Panc1 (cell line): ENCODE measurements at regions of chr9 and their contacts with region 1.

Region 1: GRCh38 chr9:91775011-91775707 is 174.9 kb downstream of the ROR2 start:
- DNase-seq: no peak
- ATAC-seq: peak; percentile 90
- H3K4me3 ChIP-seq: no peak overlapping the region
- H3K27ac ChIP-seq: no peak overlapping the region
- H3K4me1 ChIP-seq: no peaks in the 10 kb centered on the region
- H3K27me3 ChIP-seq: no peaks in the 10 kb centered on the region
- CTCF ChIP-seq: peak; percentile 84

Region 2: DNA sequence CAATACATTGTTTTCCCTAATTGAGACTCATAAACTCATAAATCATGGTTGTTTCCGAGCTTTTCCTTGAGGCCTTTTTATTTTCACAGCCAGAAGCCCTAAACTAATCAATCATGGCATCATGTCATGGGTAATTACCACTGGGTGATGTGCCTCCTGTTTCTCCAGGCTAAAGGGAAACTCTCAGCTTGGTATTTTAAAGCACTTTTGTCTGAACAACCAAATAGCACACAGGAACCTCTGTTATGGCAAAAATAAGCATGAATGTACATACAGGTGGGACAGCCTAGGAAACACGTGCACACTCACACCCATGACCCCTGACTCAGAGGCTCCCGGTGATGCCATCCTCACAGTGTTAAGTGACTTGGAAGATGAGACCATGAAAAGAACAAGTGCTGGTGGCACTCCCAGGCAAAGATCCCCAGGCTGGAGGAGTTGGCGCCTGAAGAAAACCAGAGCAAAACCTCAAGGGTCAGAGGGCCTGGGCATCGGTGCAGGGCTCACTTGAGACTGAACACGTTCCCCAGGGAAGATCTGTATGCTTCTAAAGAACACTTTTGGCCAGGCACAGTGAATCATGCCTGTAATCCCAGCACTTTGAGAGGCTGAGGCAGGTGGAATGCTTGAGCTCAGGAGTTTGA is 20.6 kb after region 1 on chr9:
- CTCF ChIA-PET with region 1: interaction called, 10 read pairs
- POLR2A ChIA-PET with region 1: no interaction called
- in situ Hi-C with region 1: no loop called
- intact Hi-C with region 1: no loop called
- DNase-seq: no peak
- ATAC-seq: peak; percentile 65
- H3K4me3 ChIP-seq: no peak overlapping the region
- H3K27ac ChIP-seq: no peak overlapping the region
- H3K4me1 ChIP-seq: no peaks in the 10 kb centered on the region
- H3K27me3 ChIP-seq: no peaks in the 10 kb centered on the region
- CTCF ChIP-seq: no peak

Region 3: DNA sequence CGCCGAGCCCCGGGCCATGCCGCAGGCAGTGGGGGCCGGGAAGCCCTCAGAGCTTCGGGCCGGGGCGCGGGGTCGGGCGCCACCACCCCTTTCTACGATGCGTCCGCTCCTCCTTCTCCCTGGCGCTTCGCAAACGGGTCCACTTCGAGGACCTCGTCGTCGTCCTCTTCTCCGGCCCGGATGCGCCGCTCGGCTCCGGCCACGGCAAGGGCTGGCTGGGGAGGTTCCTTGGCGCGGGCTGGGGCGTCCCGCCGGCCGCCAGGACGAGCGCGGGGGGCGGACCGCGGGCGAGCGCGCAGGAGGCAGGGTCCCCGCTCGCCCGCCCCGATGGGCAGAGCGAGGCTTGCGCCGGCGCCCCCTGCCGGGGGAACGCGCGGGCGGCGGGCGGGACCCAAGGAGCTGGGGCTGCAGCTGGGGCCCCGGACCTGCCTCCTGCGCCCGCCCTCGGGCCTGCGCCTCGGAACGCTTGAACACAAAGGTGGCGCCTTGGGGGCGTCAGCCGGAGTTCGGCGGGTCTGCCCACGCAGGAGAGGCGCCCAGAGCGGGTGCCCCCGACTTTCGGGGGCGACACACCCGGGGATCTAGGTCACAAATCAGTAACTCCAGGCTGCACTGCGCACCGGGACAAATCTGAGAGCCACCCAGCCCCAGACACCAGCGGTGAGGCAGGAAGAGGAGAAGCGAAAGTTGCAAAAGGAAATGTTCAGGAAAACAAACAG is 174.9 kb after region 1 on chr9 and contains the start of gene ROR2:
- CTCF ChIA-PET with region 1: no interaction called
- POLR2A ChIA-PET with region 1: no interaction called
- in situ Hi-C with region 1: no loop called
- intact Hi-C with region 1: loop called (anchors 5 kb)
- DNase-seq: no peak
- ATAC-seq: peak; percentile 93
- H3K4me3 ChIP-seq: peak within 1 kb of the TSS; percentile 44 to 48
- H3K27ac ChIP-seq: no peak within 1 kb of the TSS; the same call in 1 of the 2 replicates
- H3K4me1 ChIP-seq: peaks cover 4% of the 10 kb centered on the region; the same call in 1 of the 2 replicates
- H3K27me3 ChIP-seq: peaks cover 4% of the 10 kb centered on the region; the same call in 1 of the 2 replicates
- CTCF ChIP-seq: peak; percentile 90
- total RNA-seq, gene ROR2: 5.9 TPM